ENCODE measurements at regions of chr2 and their contacts with region 1.

Region 1: DNA sequence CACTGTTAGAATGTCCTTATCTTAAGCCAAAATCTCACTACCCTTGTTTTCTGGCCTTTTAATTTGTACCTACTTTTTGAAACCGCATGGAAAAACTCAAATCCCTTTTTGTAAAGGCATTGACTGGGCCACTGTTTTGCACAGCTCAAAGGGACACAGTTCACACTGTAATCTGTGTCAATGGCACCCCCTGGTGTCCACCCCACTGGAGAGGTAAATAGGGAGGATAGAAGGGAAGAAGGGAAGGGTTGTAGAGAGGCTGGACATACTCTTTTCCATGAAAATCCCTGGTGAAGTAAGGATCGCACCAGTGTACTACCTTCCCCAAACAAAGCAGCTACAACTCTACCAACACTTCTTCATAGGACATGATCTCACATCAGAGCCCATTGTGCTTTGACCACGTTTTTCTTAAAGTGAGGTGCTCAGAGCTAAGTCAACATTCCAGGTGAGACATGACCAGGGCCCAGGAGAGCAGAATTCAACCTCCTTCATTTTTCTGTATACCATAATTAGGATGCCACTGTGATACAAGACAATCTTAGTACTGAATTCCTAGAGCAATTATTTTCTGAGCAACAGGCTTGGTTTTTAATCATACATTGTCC is 92.4 kb upstream of the RMDN2 start:
- DNase-seq: peak in 1 of 2 donors; percentile 80
- H3K4me3 ChIP-seq: no peak overlapping the region
- H3K27ac ChIP-seq: no peak overlapping the region
- H3K4me1 ChIP-seq: no peaks in the 10 kb centered on the region
- H3K27me3 ChIP-seq: no peaks in the 10 kb centered on the region
- CTCF ChIP-seq: peak; percentile 71 to 97 (median 88)
- POLR2A ChIP-seq: no peak

Region 2: GRCh38 chr2:37394796-37395555 is 437.7 kb before region 1 on chr2:
- intact Hi-C with region 1: loop called (anchors 5 kb)
- DNase-seq: no peak
- H3K4me3 ChIP-seq: no peak overlapping the region
- H3K27ac ChIP-seq: no peak overlapping the region
- H3K4me1 ChIP-seq: peaks cover 2% of the 10 kb centered on the region
- H3K27me3 ChIP-seq: no peaks in the 10 kb centered on the region
- CTCF ChIP-seq: no peak
- POLR2A ChIP-seq: no peak

Region 3: GRCh38 chr2:37414470-37414949 is 418.2 kb before region 1 on chr2:
- intact Hi-C with region 1: loop called (anchors 5 kb)
- DNase-seq: no peak
- H3K4me3 ChIP-seq: no peak overlapping the region
- H3K27ac ChIP-seq: no peak overlapping the region
- H3K4me1 ChIP-seq: no peaks in the 10 kb centered on the region
- H3K27me3 ChIP-seq: no peaks in the 10 kb centered on the region
- CTCF ChIP-seq: peak; percentile 68 to 94 (median 78)
- POLR2A ChIP-seq: no peak